Activated naive CD4-positive, alpha-beta T cell treated with anti-CD3 and anti-CD28 coated beads for 36 hours (primary cell): ENCODE measurements at regions of chr12 and their contacts with region 1.

Region 1: DNA sequence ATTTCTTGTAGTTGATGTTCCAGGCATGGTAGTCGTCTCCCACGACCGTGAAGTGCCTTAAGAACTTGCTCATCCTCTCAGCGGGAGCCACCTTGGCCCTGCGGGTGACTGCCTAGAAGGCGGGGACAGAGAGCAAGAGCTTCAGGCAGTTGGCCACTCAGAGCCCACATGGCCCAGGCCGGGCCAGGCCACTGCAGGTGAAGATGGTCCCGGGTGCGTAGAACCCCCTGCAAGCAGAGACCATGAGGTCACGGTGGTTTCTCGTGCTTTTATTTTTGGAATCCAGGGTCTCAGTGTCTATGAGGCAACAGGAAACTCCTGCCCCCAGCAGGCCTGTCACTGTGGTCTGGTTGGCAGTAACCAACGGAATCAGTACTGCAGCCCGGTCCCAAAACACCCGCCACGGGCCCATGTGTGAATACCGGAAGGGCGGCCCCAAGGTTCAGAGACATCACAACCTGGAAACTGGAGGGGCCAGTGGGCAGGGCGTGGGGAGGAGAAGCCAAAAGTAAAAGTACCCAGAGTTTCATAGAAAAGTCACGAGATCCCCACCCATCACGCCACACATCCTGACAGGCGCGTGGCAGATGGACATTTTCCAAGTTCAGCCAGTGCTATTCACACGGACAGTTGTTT is 27.5 kb downstream of the HVCN1 start:
- DNase-seq: peak; percentile 73
- H3K4me3 Mint-ChIP-seq: peak overlapping the region; percentile 26
- H3K27ac Mint-ChIP-seq: peak overlapping the region; percentile 68
- H3K4me1 Mint-ChIP-seq: peaks cover 12% of the 10 kb centered on the region
- H3K27me3 Mint-ChIP-seq: no peaks in the 10 kb centered on the region

Region 2: GRCh38 chr12:110280779-110281548 is 380.5 kb before region 1 on chr12 and contains the start of gene ATP2A2:
- CTCF ChIA-PET with region 1: no interaction called
- intact Hi-C with region 1: no loop called
- DNase-seq: peak; percentile 89
- H3K4me3 Mint-ChIP-seq: peak within 1 kb of the TSS; percentile 90
- H3K27ac Mint-ChIP-seq: peak within 1 kb of the TSS; percentile 87
- H3K4me1 Mint-ChIP-seq: peaks cover 43% of the 10 kb centered on the region
- H3K27me3 Mint-ChIP-seq: no peaks in the 10 kb centered on the region
- total RNA-seq, gene ATP2A2: 95.5 to 98.6 TPM

Region 3: GRCh38 chr12:110613771-110614684 is 47.4 kb before region 1 on chr12 and contains the start of gene TCTN1:
- CTCF ChIA-PET with region 1: no interaction called
- intact Hi-C with region 1: loop called (anchors 1 kb)
- DNase-seq: peak; percentile 98
- H3K4me3 Mint-ChIP-seq: peak within 1 kb of the TSS; percentile 84
- H3K27ac Mint-ChIP-seq: peak within 1 kb of the TSS; percentile 84
- H3K4me1 Mint-ChIP-seq: peaks cover 13% of the 10 kb centered on the region
- H3K27me3 Mint-ChIP-seq: no peaks in the 10 kb centered on the region
- total RNA-seq, gene TCTN1: 5.2 to 5.8 TPM

Region 4: DNA sequence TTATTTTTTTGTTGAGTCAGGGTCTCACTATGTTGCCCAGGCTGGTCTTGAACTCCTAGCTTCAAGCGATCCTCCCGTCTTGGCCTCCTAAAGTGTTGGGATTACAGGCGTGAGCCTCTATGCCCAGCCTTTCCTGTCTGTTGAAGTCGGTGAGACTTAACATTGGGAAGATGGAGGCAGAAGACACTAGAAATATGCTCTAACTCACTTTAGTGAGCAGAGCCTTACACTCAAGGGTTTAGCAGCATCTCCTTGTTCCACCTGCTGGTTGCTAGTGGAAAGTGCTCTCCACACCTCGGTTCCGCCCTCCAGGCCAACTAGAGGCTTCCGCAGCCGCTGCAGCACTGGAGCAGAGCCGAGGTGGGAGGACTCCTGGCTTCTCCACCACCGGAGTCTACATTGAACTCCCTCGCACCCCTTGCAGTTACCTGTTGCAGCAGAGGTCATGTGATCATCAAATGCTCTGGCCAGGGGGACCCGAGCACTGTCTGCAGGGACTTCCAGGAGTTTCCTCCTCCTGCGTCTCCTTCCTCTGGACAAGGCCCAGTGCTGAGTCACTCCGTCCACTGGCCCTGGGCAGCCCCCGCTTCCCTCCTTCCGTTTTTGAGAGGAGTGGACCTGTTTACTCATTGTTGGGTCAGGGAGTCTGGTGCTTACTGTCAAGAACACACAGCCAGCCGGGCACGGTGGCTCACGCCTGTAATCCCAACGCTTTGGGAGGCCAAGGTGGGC is 36.9 kb after region 1 on chr12:
- CTCF ChIA-PET with region 1: no interaction called
- intact Hi-C with region 1: no loop called
- DNase-seq: peak; percentile 90
- H3K4me3 Mint-ChIP-seq: no peak overlapping the region
- H3K27ac Mint-ChIP-seq: peak overlapping the region; percentile 57
- H3K4me1 Mint-ChIP-seq: peaks cover 17% of the 10 kb centered on the region
- H3K27me3 Mint-ChIP-seq: no peaks in the 10 kb centered on the region

Region 5: GRCh38 chr12:110813285-110813684 is 151.8 kb after region 1 on chr12:
- CTCF ChIA-PET with region 1: no interaction called
- intact Hi-C with region 1: no loop called
- DNase-seq: no peak
- H3K4me3 Mint-ChIP-seq: no peak overlapping the region
- H3K27ac Mint-ChIP-seq: no peak overlapping the region
- H3K4me1 Mint-ChIP-seq: peaks cover 6% of the 10 kb centered on the region
- H3K27me3 Mint-ChIP-seq: peaks cover 2% of the 10 kb centered on the region